CD4-positive, alpha-beta T cell (primary cell): ENCODE measurements at regions of chr13 and their contacts with region 1.

Region 1: DNA sequence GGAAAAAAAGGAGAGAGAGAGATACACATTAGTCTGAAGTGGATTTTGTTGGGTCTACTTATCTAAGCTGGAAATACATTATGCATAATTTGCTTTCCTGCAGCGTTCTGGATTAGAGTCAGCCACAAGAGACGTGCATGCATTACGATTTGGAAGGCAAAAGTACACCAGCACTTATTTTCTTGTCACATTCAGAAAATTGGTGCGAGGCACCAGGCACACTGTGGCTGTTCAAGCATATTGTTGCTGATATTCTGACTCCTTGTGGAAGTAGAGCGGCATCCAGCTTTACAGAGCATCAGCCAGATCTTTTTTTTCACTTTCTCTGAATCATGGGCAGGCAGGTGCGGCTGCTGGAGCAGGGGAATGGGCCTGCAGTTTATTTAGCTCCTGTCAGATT is 905.6 kb upstream of the SPRY2 start:
- DNase-seq: no peak
- ATAC-seq: no peak
- H3K4me3 ChIP-seq: no peak overlapping the region
- H3K4me3 Mint-ChIP-seq: no peak overlapping the region
- H3K27ac ChIP-seq: no peak overlapping the region
- H3K27ac Mint-ChIP-seq: no peak overlapping the region
- H3K4me1 ChIP-seq: no peaks in the 10 kb centered on the region
- H3K4me1 Mint-ChIP-seq: no peaks in the 10 kb centered on the region
- H3K27me3 ChIP-seq: no peaks in the 10 kb centered on the region
- H3K27me3 Mint-ChIP-seq: no peaks in the 10 kb centered on the region
- CTCF ChIP-seq: no peak

Region 2: GRCh38 chr13:81224209-81224833 is 22.2 kb before region 1 on chr13:
- CTCF ChIA-PET with region 1: no interaction called
- POLR2A ChIA-PET with region 1: no interaction called
- intact Hi-C with region 1: loop called in 1 of 2 experiments (anchors 2 kb)
- DNase-seq: no peak
- ATAC-seq: no peak
- H3K4me3 ChIP-seq: no peak overlapping the region
- H3K4me3 Mint-ChIP-seq: no peak overlapping the region
- H3K27ac ChIP-seq: no peak overlapping the region
- H3K27ac Mint-ChIP-seq: no peak overlapping the region
- H3K4me1 ChIP-seq: no peaks in the 10 kb centered on the region
- H3K4me1 Mint-ChIP-seq: no peaks in the 10 kb centered on the region
- H3K27me3 ChIP-seq: no peaks in the 10 kb centered on the region
- H3K27me3 Mint-ChIP-seq: no peaks in the 10 kb centered on the region
- CTCF ChIP-seq: no peak

Region 3: DNA sequence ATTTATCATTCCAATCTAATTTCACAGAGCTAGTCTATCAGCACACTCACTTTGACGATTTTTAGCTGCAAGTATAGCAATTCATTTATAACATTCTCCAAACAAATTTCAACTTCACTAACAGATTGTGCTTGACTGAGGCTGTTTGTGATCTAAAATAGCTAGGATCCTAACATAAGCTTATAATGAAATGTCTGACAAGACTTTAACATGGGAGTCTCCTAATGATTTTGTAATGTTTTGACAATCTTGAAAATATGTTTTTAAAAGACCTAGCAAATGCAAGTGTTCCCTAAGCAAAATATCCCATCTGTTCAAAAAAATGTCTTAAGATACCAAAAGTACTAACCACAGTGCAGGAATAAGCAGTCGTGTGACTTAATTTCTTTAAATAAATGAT is 16.2 kb before region 1 on chr13:
- CTCF ChIA-PET with region 1: no interaction called
- POLR2A ChIA-PET with region 1: no interaction called
- intact Hi-C with region 1: loop called (anchors 1 to 2 kb)
- DNase-seq: no peak
- ATAC-seq: no peak
- H3K4me3 ChIP-seq: no peak overlapping the region
- H3K4me3 Mint-ChIP-seq: no peak overlapping the region
- H3K27ac ChIP-seq: no peak overlapping the region
- H3K27ac Mint-ChIP-seq: no peak overlapping the region
- H3K4me1 ChIP-seq: no peaks in the 10 kb centered on the region
- H3K4me1 Mint-ChIP-seq: no peaks in the 10 kb centered on the region
- H3K27me3 ChIP-seq: no peaks in the 10 kb centered on the region
- H3K27me3 Mint-ChIP-seq: no peaks in the 10 kb centered on the region
- CTCF ChIP-seq: no peak